Vagina (tissue), 2 donors: ENCODE measurements at regions of chr21 and their contacts with region 1.

Region 1: GRCh38 chr21:23936224-23936623 is 1671.1 kb downstream of the MRPL39 start:
- DNase-seq: no peak
- H3K4me3 ChIP-seq: no peak overlapping the region
- H3K27ac ChIP-seq: no peak overlapping the region
- H3K4me1 ChIP-seq: no peaks in the 10 kb centered on the region
- H3K27me3 ChIP-seq: no peaks in the 10 kb centered on the region
- CTCF ChIP-seq: no peak
- POLR2A ChIP-seq: no peak

Region 2: DNA sequence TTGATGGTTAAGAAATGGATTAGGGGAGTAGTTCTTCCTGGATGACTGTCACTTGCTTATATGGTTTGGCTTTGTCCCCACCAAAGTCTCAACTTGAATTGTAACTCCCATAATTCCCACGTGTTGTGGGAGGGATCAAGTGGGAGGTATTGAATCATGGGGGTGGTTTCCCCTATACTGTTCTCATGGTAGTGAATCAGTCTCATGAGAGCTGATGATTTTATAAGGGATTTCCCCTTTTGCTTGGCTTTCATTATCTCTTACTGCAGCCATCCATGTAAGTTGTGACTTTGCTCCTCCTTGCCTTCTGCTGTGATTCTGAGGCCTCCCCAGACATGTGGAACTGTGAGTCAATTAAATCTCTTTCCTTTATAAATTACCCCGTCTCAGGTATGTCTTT is 50.0 kb after region 1 on chr21:
- intact Hi-C with region 1: loop called (anchors 10 kb)
- DNase-seq: no peak
- H3K4me3 ChIP-seq: no peak overlapping the region
- H3K27ac ChIP-seq: no peak overlapping the region
- H3K4me1 ChIP-seq: no peaks in the 10 kb centered on the region
- H3K27me3 ChIP-seq: no peaks in the 10 kb centered on the region
- CTCF ChIP-seq: no peak
- POLR2A ChIP-seq: no peak